ENCODE measurements at regions of chr7 and their contacts with region 1.

Region 1: GRCh38 chr7:54858008-54858692 is 99.1 kb upstream of the SEC61G start:
- DNase-seq: no peak
- ATAC-seq: no peak
- H3K4me3 ChIP-seq: no peak overlapping the region
- H3K27ac ChIP-seq: no peak overlapping the region
- H3K4me1 ChIP-seq: no peaks in the 10 kb centered on the region
- H3K27me3 ChIP-seq: no peaks in the 10 kb centered on the region
- CTCF ChIP-seq: no peak

Region 2: GRCh38 chr7:54689394-54690049 is 168.6 kb before region 1 on chr7:
- CTCF ChIA-PET with region 1: no interaction called
- POLR2A ChIA-PET with region 1: interaction called, 11 read pairs
- in situ Hi-C with region 1: no loop called
- intact Hi-C with region 1: no loop called
- DNase-seq: no peak
- ATAC-seq: no peak
- H3K4me3 ChIP-seq: no peak overlapping the region
- H3K27ac ChIP-seq: no peak overlapping the region
- H3K4me1 ChIP-seq: no peaks in the 10 kb centered on the region
- H3K27me3 ChIP-seq: no peaks in the 10 kb centered on the region; the same call in 1 of the 2 replicates
- CTCF ChIP-seq: no peak

Region 3: GRCh38 chr7:54904130-54904529 is 46.0 kb after region 1 on chr7:
- CTCF ChIA-PET with region 1: no interaction called
- POLR2A ChIA-PET with region 1: no interaction called
- in situ Hi-C with region 1: no loop called
- intact Hi-C with region 1: loop called (anchors 5 kb)
- DNase-seq: no peak
- ATAC-seq: no peak
- H3K4me3 ChIP-seq: no peak overlapping the region
- H3K27ac ChIP-seq: no peak overlapping the region
- H3K4me1 ChIP-seq: no peaks in the 10 kb centered on the region
- H3K27me3 ChIP-seq: no peaks in the 10 kb centered on the region
- CTCF ChIP-seq: no peak

Measured in Panc1 (cell line).